PC-9 (cell line): ENCODE measurements at regions of chr13 and their contacts with region 1.

Region 1: GRCh38 chr13:41019011-41019487 is at the start of gene ELF1:
- DNase-seq: peak; percentile 48 to 86
- H3K4me3 ChIP-seq: peak within 1 kb of the TSS; percentile 77
- H3K27ac ChIP-seq: peak within 1 kb of the TSS; percentile 100
- H3K4me1 ChIP-seq: peaks cover 31% of the 10 kb centered on the region
- H3K27me3 ChIP-seq: no peaks in the 10 kb centered on the region
- CTCF ChIP-seq: no peak
- total RNA-seq, gene ELF1: 31.2 and 36.0 TPM in 2 replicates

Region 2: DNA sequence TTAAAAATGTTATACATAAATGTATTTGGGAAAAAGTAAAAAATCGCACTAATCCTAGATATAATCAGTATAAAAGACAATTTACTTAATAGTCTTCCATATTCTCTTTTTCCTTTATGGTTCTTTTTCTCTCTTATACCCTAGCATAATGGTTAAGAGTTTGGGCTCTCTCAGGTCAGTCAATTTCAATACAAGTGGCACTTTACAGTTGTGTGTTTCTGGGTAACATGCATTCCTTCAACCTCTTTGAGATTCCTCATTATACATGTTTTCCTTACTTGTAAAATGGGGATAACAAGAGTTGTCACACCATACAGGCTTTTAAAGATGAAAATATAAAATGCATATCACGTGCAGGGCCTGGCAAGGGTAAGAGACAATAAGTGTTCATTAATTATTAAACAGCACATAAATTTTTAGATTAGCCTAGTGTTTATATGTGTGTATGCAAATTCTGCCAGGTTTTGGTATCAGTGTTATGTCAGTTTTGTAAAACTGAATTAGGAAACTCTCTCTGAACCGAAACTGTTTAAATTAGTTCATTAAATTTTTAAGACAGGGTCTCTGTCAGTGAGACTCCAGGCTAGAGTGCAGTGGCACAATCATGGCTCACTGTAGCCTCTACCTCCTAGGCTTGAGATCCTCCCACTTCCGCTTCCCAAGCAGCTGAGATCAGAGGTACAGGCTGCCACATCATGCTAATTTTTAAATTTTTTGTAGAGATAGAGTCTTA is 49.7 kb before region 1 on chr13:
- CTCF ChIA-PET with region 1: no interaction called
- POLR2A ChIA-PET with region 1: no interaction called
- intact Hi-C with region 1: loop called (anchors 10 kb)
- DNase-seq: no peak
- H3K4me3 ChIP-seq: no peak overlapping the region
- H3K27ac ChIP-seq: no peak overlapping the region
- H3K4me1 ChIP-seq: peaks cover 3% of the 10 kb centered on the region; the same call in 1 of the 2 replicates
- H3K27me3 ChIP-seq: no peaks in the 10 kb centered on the region
- CTCF ChIP-seq: no peak

Region 3: DNA sequence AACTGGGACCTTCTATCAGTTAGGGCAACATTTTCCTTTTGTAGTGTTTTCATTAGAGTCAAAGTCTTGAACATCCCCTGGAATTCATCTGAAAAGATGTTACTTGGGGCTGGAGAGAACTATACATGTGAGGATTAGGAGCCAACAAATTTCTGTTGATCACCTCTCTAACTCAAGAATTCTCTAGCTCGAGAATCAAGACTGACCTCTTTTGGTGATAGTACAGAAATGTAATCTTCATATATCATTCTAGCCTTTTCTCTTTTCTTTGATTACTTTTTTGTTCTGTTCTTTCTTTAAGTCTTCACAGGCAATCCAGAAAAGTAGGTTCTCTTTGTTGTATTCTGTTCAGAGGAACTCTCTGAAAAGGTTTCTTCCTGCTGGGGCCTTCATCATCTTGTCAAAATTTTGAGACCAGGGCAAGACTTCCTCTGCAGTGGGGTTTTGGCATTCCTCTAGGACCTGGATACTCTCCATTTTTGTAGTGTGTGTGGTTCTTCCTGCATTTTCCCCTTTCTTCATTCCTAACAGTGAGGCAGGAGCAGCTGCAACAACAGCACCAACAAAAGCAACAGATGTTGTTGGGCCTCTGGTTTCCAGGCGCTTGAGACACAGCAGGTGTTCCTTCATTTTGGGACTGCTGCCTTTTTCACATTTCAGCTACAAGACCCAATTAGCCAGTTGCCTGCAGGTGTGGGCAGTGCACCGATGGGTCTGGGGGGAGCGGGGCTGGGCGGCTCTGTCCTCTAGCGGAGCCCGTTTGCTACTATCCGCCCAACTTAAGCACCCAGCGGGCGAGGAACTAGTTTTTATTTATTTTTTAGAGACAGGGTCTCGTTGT is 26.2 kb before region 1 on chr13:
- CTCF ChIA-PET with region 1: no interaction called
- POLR2A ChIA-PET with region 1: no interaction called
- intact Hi-C with region 1: loop called (anchors 2 kb)
- DNase-seq: no peak
- H3K4me3 ChIP-seq: no peak overlapping the region; the same call in 1 of the 2 replicates
- H3K27ac ChIP-seq: peak overlapping the region; percentile 96
- H3K4me1 ChIP-seq: peaks cover 38% of the 10 kb centered on the region
- H3K27me3 ChIP-seq: no peaks in the 10 kb centered on the region
- CTCF ChIP-seq: no peak; the same call in 1 of the 2 replicates